H1 (cell line): ENCODE measurements at regions of chr3 and their contacts with region 1.

Region 1: DNA sequence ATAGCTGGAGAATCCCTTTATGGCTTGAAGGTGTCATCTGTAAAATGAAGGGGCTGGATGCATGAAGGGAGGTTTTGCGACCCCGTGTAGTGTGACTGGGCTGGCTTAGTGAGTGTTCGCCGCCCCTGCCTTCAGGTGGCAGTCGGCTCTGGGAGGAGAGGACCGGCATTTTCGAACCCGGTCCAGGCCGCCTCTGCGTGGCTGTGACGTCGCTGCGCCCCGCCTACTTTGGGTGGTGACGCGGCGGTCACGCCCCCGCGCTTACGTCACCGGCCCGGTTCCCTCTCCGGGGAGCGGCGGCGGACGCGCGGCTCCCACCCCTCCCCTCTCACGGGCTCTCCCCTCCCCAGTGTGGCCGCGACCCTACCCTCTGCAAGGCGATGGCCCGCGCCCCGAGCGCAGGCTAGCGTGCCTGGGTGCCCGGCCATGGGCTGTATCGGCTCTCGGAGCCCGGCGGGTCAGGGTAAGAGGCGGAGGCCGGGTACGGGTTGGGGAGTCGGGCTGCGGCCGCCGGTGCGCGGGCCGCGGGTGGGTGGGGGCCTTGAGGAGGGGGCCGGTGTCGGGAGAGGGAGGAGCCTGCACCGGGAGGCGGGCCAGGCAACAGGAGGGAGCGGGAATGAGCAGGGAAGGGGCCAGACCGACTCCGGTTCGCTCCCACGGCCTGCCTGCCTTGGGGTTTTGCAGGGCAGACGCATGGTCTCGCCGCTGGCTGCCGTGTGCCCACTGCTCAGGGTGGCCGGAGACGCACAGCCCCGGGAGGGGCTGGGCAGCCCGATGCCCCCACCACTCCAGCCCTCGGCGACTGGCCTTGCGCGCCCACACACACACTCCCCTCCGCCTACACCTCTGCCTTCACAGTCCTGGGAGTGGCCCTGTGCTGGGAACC is 1.5 kb upstream of the FAM131A start:
- DNase-seq: peak; percentile 64 to 99
- H3K4me3 ChIP-seq: peak overlapping the region; percentile 76 to 83 (median 80)
- H3K27ac ChIP-seq: peak overlapping the region; percentile 82
- H3K4me1 ChIP-seq: peaks cover 5 to 27% (median 18%) of the 10 kb centered on the region in 4 experiments
- H3K27me3 ChIP-seq: no peaks in the 10 kb centered on the region
- CTCF ChIP-seq: peak in 1 of 3 experiments; percentile 28; a peak in 1 of 4 replicates
- EP300 ChIP-seq: peak; percentile 26 to 30; a peak in 2 of 3 replicates
- POLR2A ChIP-seq: peak in 1 of 2 experiments; percentile 84; a peak in 2 of 3 replicates
- RAD21 ChIP-seq: peak; percentile 9 to 23; a peak in 2 of 4 replicates

Region 2: GRCh38 chr3:184295771-184296170 is 40.1 kb before region 1 on chr3:
- CTCF ChIA-PET with region 1: no interaction called
- POLR2A ChIA-PET with region 1: no interaction called
- DNase-seq: no peak
- H3K4me3 ChIP-seq: no peak overlapping the region
- H3K27ac ChIP-seq: no peak overlapping the region
- H3K4me1 ChIP-seq: peaks cover 0 to 7% (median 2%) of the 10 kb centered on the region in 4 experiments; a peak in 4 of 7 replicates
- H3K27me3 ChIP-seq: no peaks in the 10 kb centered on the region
- CTCF ChIP-seq: no peak
- EP300 ChIP-seq: no peak
- POLR2A ChIP-seq: no peak
- RAD21 ChIP-seq: no peak

Region 3: DNA sequence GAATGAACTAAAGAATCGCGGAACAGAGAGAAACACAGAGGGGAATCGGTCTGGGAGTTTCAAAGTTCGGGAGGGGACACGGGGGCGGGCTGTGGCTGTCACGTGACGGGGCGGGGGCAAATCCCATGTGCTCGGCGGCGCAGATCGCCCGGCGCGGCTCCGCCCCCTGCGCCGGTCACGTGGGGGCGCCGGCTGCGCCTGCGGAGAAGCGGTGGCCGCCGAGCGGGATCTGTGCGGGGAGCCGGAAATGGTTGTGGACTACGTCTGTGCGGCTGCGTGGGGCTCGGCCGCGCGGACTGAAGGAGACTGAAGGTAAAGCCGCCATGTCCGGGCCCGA is 21.6 kb before region 1 on chr3 and contains the start of gene EIF4G1:
- CTCF ChIA-PET with region 1: interaction called, 5 read pairs
- POLR2A ChIA-PET with region 1: interaction called, 148 read pairs
- DNase-seq: peak; percentile 77 to 92
- H3K4me3 ChIP-seq: peak within 1 kb of the TSS; percentile 44 to 96 (median 77)
- H3K27ac ChIP-seq: peak within 1 kb of the TSS; percentile 82
- H3K4me1 ChIP-seq: peaks cover 3 to 9% (median 6%) of the 10 kb centered on the region in 4 experiments
- H3K27me3 ChIP-seq: no peaks in the 10 kb centered on the region
- CTCF ChIP-seq: no peak
- EP300 ChIP-seq: no peak
- POLR2A ChIP-seq: peak; percentile 83 to 86; a peak in 2 of 3 replicates
- RAD21 ChIP-seq: no peak
- total RNA-seq, gene EIF4G1: 473 and 480 TPM in 2 replicates

Region 4: DNA sequence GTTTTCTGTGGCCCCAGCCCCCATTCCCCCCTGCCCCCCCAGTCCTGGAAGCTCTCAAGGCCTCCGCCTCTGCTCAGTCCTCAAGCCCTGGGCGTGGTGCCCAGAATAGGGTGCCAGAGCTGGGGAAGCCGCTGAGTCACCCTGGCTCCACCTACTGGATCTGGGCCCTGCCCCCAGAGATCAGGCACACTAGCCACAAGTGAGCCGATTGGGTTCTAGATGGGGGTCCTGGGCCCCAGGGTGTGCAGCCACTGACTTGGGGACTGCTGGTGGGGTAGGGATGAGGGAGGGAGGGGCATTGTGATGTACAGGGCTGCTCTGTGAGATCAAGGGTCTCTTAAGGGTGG is 15.8 kb before region 1 on chr3:
- CTCF ChIA-PET with region 1: interaction called, 5 read pairs
- POLR2A ChIA-PET with region 1: interaction called, 148 read pairs
- DNase-seq: no peak
- H3K4me3 ChIP-seq: no peak overlapping the region
- H3K27ac ChIP-seq: no peak overlapping the region; the same call in 1 of the 2 replicates
- H3K4me1 ChIP-seq: peaks cover 3 to 9% (median 6%) of the 10 kb centered on the region in 4 experiments
- H3K27me3 ChIP-seq: no peaks in the 10 kb centered on the region
- CTCF ChIP-seq: no peak
- EP300 ChIP-seq: no peak
- POLR2A ChIP-seq: no peak
- RAD21 ChIP-seq: no peak

Region 5: DNA sequence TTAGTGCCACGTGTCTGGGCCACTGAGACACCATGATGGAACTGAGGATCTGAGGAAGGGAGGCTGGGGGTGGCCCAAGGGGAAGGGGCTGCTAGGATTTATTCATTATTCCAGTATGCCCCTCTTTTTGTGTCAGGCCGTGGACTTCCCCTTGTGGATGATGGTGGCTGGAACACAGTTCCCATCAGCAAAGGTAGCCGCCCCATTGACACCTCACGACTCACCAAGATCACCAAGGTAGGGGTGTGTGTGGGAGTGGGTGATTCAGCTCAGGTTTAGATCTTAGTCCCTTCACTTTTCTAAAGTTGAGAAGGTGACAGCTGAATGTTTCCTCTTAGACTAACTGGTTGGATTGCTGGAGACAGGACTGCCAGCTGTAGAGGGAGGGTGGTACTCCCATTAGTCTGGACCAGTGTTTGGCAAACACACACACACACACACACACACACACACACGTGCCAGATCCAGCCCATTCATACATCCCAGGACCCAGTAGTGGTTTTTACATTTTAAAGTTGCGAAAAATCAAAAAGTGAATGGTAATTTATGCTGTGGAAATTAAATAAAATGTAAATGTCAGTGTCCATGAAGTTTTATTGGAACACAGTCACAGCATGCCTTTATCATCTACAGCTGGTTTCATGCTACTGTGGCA is 10.1 kb before region 1 on chr3:
- CTCF ChIA-PET with region 1: interaction called, 4 read pairs
- POLR2A ChIA-PET with region 1: interaction called, 148 read pairs
- DNase-seq: no peak
- H3K4me3 ChIP-seq: no peak overlapping the region
- H3K27ac ChIP-seq: no peak overlapping the region
- H3K4me1 ChIP-seq: no peaks in the 10 kb centered on the region
- H3K27me3 ChIP-seq: no peaks in the 10 kb centered on the region
- CTCF ChIP-seq: no peak
- EP300 ChIP-seq: no peak
- POLR2A ChIP-seq: no peak
- RAD21 ChIP-seq: no peak

Region 6: GRCh38 chr3:184354121-184354728 is 18.3 kb after region 1 on chr3:
- CTCF ChIA-PET with region 1: interaction called, 49 read pairs
- POLR2A ChIA-PET with region 1: interaction called, 23 read pairs
- DNase-seq: peak in 1 of 2 experiments; percentile 85
- H3K4me3 ChIP-seq: no peak overlapping the region
- H3K27ac ChIP-seq: no peak overlapping the region
- H3K4me1 ChIP-seq: peaks cover 0 to 7% (median 3%) of the 10 kb centered on the region in 4 experiments; a peak in 2 of 7 replicates
- H3K27me3 ChIP-seq: no peaks in the 10 kb centered on the region
- CTCF ChIP-seq: peak in 2 of 3 experiments; percentile 60 to 74; a peak in 3 of 4 replicates
- EP300 ChIP-seq: no peak
- POLR2A ChIP-seq: no peak
- RAD21 ChIP-seq: peak; percentile 37 to 58; a peak in 3 of 4 replicates

Region 7: DNA sequence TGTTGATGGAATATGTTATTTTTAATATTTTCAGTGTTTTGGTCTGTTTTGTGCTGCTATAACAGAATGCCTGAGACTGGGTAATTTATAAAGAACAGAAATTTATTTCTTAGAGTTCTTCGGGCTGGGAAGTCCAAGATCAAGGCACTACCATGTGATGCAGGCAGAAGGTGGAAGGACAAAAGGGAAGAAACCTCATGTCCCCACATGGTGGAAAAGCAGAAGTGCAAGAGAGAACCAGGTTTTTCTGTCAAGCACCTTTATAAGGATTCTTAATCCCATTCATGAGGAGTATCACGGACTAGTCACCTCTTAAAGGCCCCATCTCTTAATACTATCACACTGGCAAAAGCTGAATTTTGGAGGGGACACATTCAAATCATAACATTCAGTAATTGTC is 167.7 kb after region 1 on chr3:
- CTCF ChIA-PET with region 1: no interaction called
- POLR2A ChIA-PET with region 1: no interaction called
- DNase-seq: no peak
- H3K4me3 ChIP-seq: no peak overlapping the region
- H3K27ac ChIP-seq: no peak overlapping the region
- H3K4me1 ChIP-seq: peaks cover 0 to 6% (median 4%) of the 10 kb centered on the region in 4 experiments; a peak in 5 of 7 replicates
- H3K27me3 ChIP-seq: no peaks in the 10 kb centered on the region; a peak in 2 of 7 replicates
- CTCF ChIP-seq: no peak
- EP300 ChIP-seq: no peak
- POLR2A ChIP-seq: no peak
- RAD21 ChIP-seq: no peak